Right lobe of liver (tissue), 6 donors: ENCODE measurements at regions of chr2 and their contacts with region 1.

Region 1: GRCh38 chr2:20595431-20596192 is 55.3 kb downstream of the HS1BP3 start:
- DNase-seq: peak; percentile 45 to 65 (median 46)
- ATAC-seq: no peak
- H3K4me3 ChIP-seq: no peak overlapping the region
- H3K27ac ChIP-seq: peak overlapping the region; percentile 78 to 87 (median 78)
- H3K4me1 ChIP-seq: peaks cover 7 to 94% (median 49%) of the 10 kb centered on the region in 4 donors
- H3K27me3 ChIP-seq: no peaks in the 10 kb centered on the region
- CTCF ChIP-seq: no peak
- POLR2A ChIP-seq: no peak

Region 2: DNA sequence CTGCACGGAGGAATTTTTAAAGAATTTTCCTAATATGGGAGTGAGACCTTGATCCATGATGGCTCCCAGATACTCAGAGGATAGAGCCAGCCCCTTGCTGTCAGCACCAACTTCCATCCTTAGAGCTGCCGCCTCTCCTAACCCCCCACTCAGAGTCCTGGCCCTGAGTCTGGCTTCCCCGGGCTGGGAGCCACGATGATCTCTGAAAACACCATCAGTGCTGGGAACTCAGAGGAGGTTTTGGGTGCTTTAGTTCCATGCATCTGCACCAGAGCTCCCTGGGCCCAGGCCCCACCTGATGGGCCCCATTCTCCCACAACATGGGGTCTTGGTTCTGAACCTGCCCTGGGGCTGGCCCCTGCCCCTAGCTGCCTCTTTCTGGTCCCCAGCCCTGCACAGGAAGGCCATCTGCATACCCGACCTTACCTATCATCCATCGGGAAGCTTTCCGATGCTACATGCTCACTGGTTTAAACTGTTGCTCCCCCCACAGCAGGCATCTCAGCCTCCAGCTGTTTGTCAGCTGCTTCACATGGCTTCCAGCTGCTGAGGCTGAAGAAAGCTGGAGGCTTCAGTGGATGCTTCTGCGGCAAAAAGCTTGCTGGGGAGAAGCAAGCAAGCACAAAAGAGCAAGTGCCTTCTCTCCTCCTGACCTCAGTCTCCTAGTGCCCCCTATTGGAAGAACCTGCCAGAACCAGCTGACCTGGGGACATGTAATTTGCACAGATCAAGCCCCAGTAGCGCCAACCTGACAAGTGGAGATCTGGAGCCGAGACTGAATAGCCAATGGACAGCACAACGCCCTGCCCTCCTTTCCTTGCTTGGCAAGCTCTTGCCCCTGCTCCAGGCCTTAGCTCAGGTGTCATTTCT is 173.0 kb before region 1 on chr2:
- intact Hi-C with region 1: no loop called
- DNase-seq: peak in 1 of 3 donors; percentile 52
- ATAC-seq: peak in 2 of 4 donors; percentile 0 to 43
- H3K4me3 ChIP-seq: no peak overlapping the region
- H3K27ac ChIP-seq: peak overlapping the region in 1 of 3 donors; percentile 45
- H3K4me1 ChIP-seq: peaks cover 0 to 56% (median 23%) of the 10 kb centered on the region in 4 donors
- H3K27me3 ChIP-seq: no peaks in the 10 kb centered on the region
- CTCF ChIP-seq: peak in 2 of 4 donors; percentile 7 to 48
- POLR2A ChIP-seq: no peak

Region 3: DNA sequence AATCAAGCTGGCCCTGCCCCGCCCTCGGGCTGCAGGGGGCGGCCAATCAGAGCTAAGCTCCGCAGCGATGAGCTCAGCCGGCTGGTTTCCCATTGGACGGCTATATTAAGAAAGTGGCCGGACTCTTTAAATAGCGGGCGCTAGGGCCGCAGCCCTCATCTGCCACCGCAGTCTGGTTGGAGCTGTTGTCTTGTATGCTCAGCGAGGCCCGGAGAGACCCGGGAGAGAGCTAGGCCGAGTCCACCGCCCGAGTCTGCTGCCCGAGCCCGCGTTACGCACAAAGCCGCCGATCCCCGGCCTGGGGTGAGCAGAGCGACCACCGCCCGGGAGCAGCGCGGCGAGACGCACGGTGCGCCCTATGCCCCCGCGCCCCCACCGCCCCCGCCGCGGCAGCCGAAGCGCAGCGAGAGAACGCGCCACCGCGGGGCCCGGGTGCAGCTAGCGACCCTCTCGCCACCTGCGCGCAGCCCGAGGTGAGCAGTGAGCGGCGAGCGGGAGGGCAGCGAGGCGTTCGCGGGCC is 148.6 kb before region 1 on chr2 and contains the start of gene RHOB:
- intact Hi-C with region 1: loop called (anchors 10 kb)
- DNase-seq: peak; percentile 98 to 99 (median 98)
- ATAC-seq: peak; percentile 76 to 86 (median 78)
- H3K4me3 ChIP-seq: peak within 1 kb of the TSS; percentile 67 to 99 (median 90)
- H3K27ac ChIP-seq: peak within 1 kb of the TSS; percentile 98 to 100 (median 99)
- H3K4me1 ChIP-seq: peaks cover 0 to 42% (median 5%) of the 10 kb centered on the region in 4 donors
- H3K27me3 ChIP-seq: no peaks in the 10 kb centered on the region
- CTCF ChIP-seq: no peak
- POLR2A ChIP-seq: peak; percentile 100
- total RNA-seq, gene RHOB: 185 to 656 (median 388) TPM

Region 4: GRCh38 chr2:20737505-20737904 is 141.9 kb after region 1 on chr2:
- intact Hi-C with region 1: no loop called
- DNase-seq: no peak
- ATAC-seq: no peak
- H3K4me3 ChIP-seq: no peak overlapping the region
- H3K27ac ChIP-seq: no peak overlapping the region
- H3K4me1 ChIP-seq: peaks cover 0 to 13% (median 0%) of the 10 kb centered on the region in 4 donors
- H3K27me3 ChIP-seq: no peaks in the 10 kb centered on the region
- CTCF ChIP-seq: no peak
- POLR2A ChIP-seq: no peak